Gastrocnemius medialis (tissue), 4 donors: ENCODE measurements at regions of chr5 and their contacts with region 1.

Region 1: DNA sequence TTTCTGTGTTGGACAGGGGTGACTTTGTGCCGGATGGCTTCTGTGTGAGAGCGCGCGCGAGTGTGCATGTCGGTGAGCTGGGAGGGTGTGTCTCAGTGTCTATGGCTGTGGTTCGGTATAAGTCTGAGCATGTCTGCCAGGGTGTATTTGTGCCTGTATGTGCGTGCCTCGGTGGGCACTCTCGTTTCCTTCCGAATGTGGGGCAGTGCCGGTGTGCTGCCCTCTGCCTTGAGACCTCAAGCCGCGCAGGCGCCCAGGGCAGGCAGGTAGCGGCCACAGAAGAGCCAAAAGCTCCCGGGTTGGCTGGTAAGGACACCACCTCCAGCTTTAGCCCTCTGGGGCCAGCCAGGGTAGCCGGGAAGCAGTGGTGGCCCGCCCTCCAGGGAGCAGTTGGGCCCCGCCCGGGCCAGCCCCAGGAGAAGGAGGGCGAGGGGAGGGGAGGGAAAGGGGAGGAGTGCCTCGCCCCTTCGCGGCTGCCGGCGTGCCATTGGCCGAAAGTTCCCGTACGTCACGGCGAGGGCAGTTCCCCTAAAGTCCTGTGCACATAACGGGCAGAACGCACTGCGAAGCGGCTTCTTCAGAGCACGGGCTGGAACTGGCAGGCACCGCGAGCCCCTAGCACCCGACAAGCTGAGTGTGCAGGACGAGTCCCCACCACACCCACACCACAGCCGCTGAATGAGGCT is at the start of gene ADRB2:
- DNase-seq: peak; percentile 97 to 98
- ATAC-seq: peak; percentile 77 to 79
- H3K4me3 ChIP-seq: peak within 1 kb of the TSS; percentile 60 to 81 (median 74)
- H3K27ac ChIP-seq: peak within 1 kb of the TSS; percentile 90 to 97 (median 94)
- H3K4me1 ChIP-seq: peaks cover 27 to 28% of the 10 kb centered on the region in 2 donors
- H3K27me3 ChIP-seq: no peaks in the 10 kb centered on the region
- CTCF ChIP-seq: peak in 1 of 5 experiments; percentile 3
- POLR2A ChIP-seq: peak; percentile 99
- total RNA-seq, gene ADRB2: 4.2 to 17.3 (median 6.8) TPM

Region 2: DNA sequence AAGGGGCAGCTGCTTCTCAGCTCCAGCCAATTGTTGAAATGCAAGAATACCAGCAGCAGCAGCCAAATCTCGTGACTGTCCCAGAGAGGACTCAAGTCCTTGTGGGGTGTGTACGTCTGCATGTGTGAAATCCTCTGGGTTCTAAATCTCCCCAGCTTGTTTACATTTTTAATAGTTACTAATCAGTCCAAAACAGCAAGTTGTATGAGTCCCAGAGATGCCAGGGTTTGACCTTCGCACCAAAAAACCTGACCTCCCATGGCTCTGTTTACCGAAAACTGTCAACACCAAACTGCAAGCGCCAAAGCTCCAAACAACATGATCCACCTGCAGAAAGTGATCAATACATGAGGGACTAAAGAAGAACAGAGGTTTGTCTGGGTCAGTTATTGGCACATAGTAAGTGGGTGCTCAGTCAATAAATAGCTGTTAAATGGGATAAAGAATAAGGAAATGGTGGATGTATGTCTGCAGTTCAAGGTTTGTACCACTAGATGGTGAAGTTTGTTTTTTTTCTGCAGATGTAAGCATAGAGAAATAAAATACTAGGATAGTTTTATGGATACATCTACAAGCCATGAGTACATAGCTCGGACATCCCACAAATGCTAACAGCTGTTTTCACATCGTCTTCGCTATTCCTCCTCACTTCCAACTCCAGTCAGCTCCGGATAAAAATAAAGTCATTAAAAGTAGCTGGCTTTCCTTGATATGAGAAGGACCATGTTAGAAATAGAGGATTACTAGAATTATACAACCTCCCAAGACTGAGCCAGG is 85.0 kb before region 1 on chr5:
- in situ Hi-C with region 1: no loop called
- intact Hi-C with region 1: loop called (anchors 2 kb)
- DNase-seq: peak; percentile 73 to 77
- ATAC-seq: peak; percentile 95 to 97
- H3K4me3 ChIP-seq: peak overlapping the region in 3 of 4 donors; percentile 14 to 21 (median 15)
- H3K27ac ChIP-seq: peak overlapping the region; percentile 65 to 77 (median 73)
- H3K4me1 ChIP-seq: peaks cover 9 to 20% of the 10 kb centered on the region in 2 donors
- H3K27me3 ChIP-seq: no peaks in the 10 kb centered on the region
- CTCF ChIP-seq: peak; percentile 81 to 85 (median 83)
- POLR2A ChIP-seq: no peak

Region 3: DNA sequence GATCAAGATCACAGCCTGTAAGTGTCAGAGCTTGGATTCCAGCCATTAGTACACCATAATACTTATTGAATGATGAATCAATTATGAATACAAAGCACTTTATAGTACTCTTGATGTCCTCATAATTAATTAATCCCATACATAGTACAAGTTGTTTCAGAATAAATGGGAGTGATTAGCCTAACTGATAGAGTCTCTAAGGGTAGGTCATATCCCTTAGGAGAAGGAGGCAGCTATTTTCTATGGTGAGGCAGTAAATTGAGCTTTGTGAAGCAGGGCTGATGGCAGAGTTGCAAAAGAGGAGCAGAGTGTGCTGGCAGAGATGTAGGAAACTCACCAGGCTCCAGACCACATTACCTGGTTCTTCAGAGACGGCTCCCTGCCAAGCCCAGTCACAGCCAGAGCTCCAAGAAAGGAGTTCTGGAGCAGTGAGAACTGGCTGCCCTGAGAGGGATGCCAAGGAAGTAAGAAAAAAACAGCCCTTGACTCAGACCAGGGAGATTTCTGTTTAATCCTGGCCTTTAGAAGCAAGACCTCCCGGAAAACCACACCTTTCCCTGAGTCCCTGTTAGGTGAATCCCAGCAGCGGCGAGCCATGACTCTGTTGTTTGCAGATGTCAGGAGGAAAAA is 123.8 kb after region 1 on chr5:
- in situ Hi-C with region 1: loop called in 1 of 4 experiments (anchors 10 kb)
- intact Hi-C with region 1: loop called (anchors 2 kb)
- DNase-seq: peak; percentile 93 to 96
- ATAC-seq: peak; percentile 92 to 96
- H3K4me3 ChIP-seq: peak overlapping the region; percentile 11 to 31 (median 15)
- H3K27ac ChIP-seq: peak overlapping the region; percentile 94 to 98 (median 96)
- H3K4me1 ChIP-seq: peaks cover 23 to 29% of the 10 kb centered on the region in 2 donors
- H3K27me3 ChIP-seq: no peaks in the 10 kb centered on the region
- CTCF ChIP-seq: no peak
- POLR2A ChIP-seq: peak in 1 of 2 donors; percentile 17

Region 4: GRCh38 chr5:148963664-148964063 is 137.5 kb after region 1 on chr5:
- in situ Hi-C with region 1: loop called in 1 of 4 experiments (anchors 10 kb)
- intact Hi-C with region 1: loop called (anchors 1 kb)
- DNase-seq: no peak
- ATAC-seq: no peak
- H3K4me3 ChIP-seq: no peak overlapping the region
- H3K27ac ChIP-seq: peak overlapping the region; percentile 90 to 96 (median 93)
- H3K4me1 ChIP-seq: peaks cover 24 to 41% of the 10 kb centered on the region in 2 donors
- H3K27me3 ChIP-seq: no peaks in the 10 kb centered on the region
- CTCF ChIP-seq: no peak
- POLR2A ChIP-seq: no peak

Region 5: GRCh38 chr5:149153751-149154610 is 327.8 kb after region 1 on chr5:
- in situ Hi-C with region 1: no loop called
- intact Hi-C with region 1: loop called (anchors 5 kb)
- DNase-seq: peak; percentile 89 to 95
- ATAC-seq: peak; percentile 96
- H3K4me3 ChIP-seq: no peak overlapping the region
- H3K27ac ChIP-seq: peak overlapping the region; percentile 87 to 97 (median 92)
- H3K4me1 ChIP-seq: peaks cover 61 to 89% of the 10 kb centered on the region in 2 donors
- H3K27me3 ChIP-seq: no peaks in the 10 kb centered on the region
- CTCF ChIP-seq: peak in 1 of 5 experiments; percentile 8
- POLR2A ChIP-seq: peak; percentile 58 to 61